Tibial artery (tissue), 4 donors: ENCODE measurements at regions of chr17 and their contacts with region 1.

Region 1: DNA sequence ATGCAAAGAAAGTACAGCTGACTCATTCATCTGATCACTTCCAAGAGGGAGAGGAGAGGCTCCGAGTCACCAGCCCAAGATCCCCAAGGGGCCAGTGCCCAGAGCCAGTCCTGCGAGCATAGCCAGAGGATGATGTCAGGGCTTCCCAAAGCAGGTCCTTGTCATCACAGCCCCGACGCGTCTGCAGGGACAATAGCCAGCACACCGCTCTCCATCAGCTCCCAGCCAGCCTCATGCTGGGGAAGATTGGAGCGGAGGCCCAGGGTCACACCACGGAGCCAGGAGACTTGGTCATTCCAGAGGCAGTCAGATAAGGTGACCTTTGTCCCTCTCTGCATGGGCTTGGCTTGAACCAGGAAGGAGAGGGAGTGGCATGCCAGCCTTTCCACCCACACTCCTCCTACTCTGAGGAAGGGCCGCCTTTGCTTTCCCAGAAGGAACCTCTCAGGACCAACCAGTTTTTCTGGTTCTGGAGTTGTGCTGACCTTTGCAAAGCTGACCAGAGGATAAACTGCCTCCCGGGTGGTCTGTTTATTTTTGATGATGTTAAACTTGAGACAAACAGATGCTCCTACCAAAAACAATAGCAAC is 58.3 kb upstream of the ARHGAP44 start:
- DNase-seq: peak; percentile 84 to 94
- H3K4me3 ChIP-seq: no peak overlapping the region
- H3K27ac ChIP-seq: peak overlapping the region; percentile 78 to 86
- H3K4me1 ChIP-seq: peaks cover 0 to 50% (median 28%) of the 10 kb centered on the region in 4 donors
- H3K27me3 ChIP-seq: no peaks in the 10 kb centered on the region
- CTCF ChIP-seq: no peak

Region 2: DNA sequence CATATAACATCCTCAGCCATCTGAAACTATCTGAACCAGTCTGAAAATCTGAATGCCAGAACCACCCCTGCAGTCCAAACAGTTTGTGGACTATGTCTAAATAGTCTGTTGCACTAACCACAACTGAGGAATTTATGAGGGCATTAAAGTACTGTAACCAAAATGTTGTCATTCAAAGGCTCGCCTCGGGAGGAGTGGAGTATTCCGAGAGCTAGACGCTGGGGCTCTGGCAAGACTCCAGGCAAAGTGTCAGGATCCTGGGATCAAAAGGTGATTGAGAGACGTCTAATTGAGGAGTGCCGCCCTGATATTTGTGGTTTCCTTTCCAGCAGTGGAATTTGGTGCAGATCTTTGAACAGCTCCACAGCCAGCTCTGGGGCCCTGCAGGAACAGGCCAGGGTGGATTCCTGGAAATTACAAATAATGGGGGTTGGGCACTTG is 208.3 kb before region 1 on chr17:
- intact Hi-C with region 1: no loop called
- DNase-seq: no peak
- H3K4me3 ChIP-seq: no peak overlapping the region
- H3K27ac ChIP-seq: peak overlapping the region; percentile 29 to 38
- H3K4me1 ChIP-seq: peaks cover 0 to 23% (median 9%) of the 10 kb centered on the region in 4 donors
- H3K27me3 ChIP-seq: no peaks in the 10 kb centered on the region
- CTCF ChIP-seq: no peak

Region 3: DNA sequence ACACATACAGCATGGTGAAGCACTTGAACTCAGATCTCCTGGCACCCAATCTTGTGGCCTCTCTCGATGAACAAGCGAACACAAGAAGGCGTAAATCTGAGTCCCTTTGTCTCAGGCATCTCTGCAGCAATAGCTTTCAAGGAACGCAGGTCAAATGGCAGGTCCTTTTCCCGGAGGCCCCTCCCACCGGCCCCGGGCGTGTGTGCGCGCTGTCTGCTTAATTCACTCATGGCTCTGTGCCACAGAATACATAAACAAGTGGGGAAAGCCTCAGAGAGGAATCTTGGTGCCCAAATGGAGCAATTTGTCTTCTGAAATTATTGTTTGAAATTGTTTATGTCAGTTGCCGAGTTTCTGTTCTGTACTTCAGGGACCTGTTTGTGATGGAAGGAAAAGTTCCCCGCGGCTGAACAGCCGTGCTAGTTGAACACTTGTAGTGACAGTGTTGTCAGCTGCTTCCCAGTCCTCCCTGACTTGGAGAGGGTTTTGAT is 50.6 kb before region 1 on chr17:
- intact Hi-C with region 1: loop called (anchors 5 kb)
- DNase-seq: no peak
- H3K4me3 ChIP-seq: peak overlapping the region in 1 of 2 donors; percentile 5
- H3K27ac ChIP-seq: peak overlapping the region; percentile 41 to 44
- H3K4me1 ChIP-seq: peaks cover 0 to 61% (median 14%) of the 10 kb centered on the region in 4 donors
- H3K27me3 ChIP-seq: no peaks in the 10 kb centered on the region
- CTCF ChIP-seq: no peak